Activated CD4-positive, alpha-beta memory T cell treated with anti-CD3 and anti-CD28 coated beads for 36 hours (primary cell): ENCODE measurements at regions of chr11 and their contacts with region 1.

Region 1: DNA sequence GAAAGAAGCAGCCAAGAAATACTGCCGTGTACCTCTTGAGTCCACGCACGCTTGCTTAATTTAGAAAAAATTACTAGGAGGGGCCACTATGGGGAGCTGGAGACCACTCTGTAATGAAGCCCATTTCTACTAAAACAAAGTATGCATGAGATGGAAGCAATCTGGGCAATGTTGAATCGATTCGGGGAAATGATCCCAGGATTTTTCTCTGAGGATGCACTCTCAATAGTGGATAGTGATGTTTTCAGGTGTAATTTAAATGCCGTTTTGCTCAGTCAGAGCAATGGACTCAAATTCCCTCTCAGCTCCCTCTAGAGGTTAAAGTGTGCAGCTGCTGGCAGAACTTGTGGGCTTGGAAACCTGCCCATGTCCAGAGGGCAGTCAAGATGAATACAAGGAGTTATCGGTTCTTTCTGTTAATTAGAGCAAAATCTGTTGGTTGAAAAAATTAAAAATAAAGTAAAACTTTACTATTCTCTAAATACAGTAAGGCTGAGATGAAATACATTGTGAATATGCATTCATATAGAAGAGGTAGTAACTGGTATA is 64.1 kb downstream of the ME3 start:
- DNase-seq: peak; percentile 59
- H3K4me3 Mint-ChIP-seq: no peak overlapping the region
- H3K27ac Mint-ChIP-seq: no peak overlapping the region
- H3K4me1 Mint-ChIP-seq: peaks cover 10% of the 10 kb centered on the region
- H3K27me3 Mint-ChIP-seq: peaks cover 2% of the 10 kb centered on the region

Region 2: DNA sequence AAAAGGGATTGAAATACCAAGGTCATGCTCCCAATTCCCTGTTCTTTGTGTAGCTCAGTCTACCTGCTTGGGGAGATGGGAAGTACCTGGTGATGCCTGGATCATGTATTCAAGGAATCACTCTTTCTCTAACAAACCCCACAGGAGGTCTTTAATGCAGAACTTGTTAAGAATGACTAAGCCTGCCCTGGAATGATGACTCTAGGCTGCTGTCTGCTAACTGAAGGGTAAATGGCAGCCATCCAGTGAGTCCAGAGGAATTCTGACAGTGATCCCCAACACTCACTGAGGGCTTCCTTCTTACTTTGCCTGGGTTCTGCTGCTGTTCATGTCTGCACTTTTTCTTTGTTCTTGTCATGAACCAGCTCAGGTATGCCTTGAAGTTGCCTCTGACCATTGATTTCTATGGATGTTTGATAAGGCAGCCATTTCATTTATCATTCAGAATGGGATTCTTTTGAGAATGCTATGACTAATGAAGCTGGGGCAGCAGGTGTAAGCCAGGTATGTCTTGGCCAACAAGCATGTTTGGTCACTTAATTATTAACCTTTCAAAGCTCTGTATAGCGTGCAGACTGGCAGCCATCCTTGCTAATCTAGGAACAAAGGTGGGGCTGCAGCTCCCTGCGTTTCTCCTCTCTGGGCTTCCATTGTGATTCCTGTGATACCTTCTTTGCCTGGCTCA is 203.5 kb after region 1 on chr11:
- CTCF ChIA-PET with region 1: interaction called, 10 read pairs
- POLR2A ChIA-PET with region 1: no interaction called
- intact Hi-C with region 1: no loop called
- DNase-seq: no peak
- H3K4me3 Mint-ChIP-seq: no peak overlapping the region
- H3K27ac Mint-ChIP-seq: no peak overlapping the region
- H3K4me1 Mint-ChIP-seq: peaks cover 4% of the 10 kb centered on the region
- H3K27me3 Mint-ChIP-seq: peaks cover 26% of the 10 kb centered on the region